ENCODE measurements at regions of chr19 and their contacts with region 1.

Region 1: GRCh38 chr19:55341171-55341588 is 1.5 kb downstream of the KMT5C start:
- DNase-seq: peak; percentile 77 to 89 (median 87)
- ATAC-seq: no peak
- H3K4me3 ChIP-seq: peak overlapping the region; percentile 93
- H3K27ac ChIP-seq: no peak overlapping the region
- H3K4me1 ChIP-seq: peaks cover 5% of the 10 kb centered on the region
- H3K27me3 ChIP-seq: no peaks in the 10 kb centered on the region

Region 2: GRCh38 chr19:55305483-55305882 is 35.7 kb before region 1 on chr19:
- intact Hi-C with region 1: no loop called
- DNase-seq: peak in 1 of 3 donors; percentile 72
- ATAC-seq: peak in 1 of 2 donors; percentile 61
- H3K4me3 ChIP-seq: no peak overlapping the region
- H3K27ac ChIP-seq: no peak overlapping the region
- H3K4me1 ChIP-seq: no peaks in the 10 kb centered on the region
- H3K27me3 ChIP-seq: no peaks in the 10 kb centered on the region

Region 3: DNA sequence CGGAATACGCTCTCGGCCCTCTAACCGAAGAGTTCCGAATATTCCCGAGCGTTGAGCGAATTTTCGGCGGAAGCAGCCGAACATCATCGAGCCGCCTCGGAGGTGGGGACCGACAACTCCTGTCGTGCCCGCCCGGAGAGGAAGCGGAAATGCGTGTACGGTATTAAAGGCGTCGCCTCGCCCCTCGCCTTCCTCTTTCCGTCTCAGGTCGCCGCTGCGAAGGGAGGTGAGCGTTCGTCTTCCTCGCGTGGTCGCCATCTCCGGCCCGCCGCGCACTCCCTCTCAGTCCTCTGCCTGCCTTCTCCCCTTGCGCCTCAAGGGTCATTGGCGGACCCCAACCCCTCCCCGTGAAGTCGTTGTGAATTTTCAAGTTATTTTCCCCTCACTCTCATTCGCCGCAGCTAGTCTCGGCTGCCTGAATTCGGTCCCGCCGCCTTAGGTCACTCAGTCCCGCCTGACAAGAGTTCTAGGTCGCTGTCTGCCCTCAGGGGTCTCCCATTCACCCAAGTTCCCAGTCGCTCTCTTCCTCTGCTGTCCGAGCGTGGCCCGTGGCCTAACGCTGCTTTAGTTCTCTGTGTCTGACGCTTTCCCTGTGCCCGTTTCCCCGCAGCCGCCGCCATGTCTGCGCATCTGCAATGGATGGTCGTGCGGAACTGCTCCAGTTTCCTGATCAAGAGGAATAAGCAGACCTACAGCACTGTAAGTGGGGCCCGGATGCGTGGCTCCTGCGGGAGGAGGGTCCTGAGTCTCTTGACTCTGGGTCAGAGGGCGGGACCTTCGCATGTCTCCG is 44.8 kb after region 1 on chr19 and contains the start of gene RPL28:
- intact Hi-C with region 1: loop called in 1 of 4 experiments (anchors 5 kb)
- DNase-seq: peak; percentile 98 to 99 (median 99)
- ATAC-seq: peak; percentile 92 to 93
- H3K4me3 ChIP-seq: peak within 1 kb of the TSS; percentile 94
- H3K27ac ChIP-seq: peak within 1 kb of the TSS; percentile 99
- H3K4me1 ChIP-seq: peaks cover 12% of the 10 kb centered on the region
- H3K27me3 ChIP-seq: no peaks in the 10 kb centered on the region
- total RNA-seq, gene RPL28: 656 to 1,015 (median 735) TPM

Region 4: DNA sequence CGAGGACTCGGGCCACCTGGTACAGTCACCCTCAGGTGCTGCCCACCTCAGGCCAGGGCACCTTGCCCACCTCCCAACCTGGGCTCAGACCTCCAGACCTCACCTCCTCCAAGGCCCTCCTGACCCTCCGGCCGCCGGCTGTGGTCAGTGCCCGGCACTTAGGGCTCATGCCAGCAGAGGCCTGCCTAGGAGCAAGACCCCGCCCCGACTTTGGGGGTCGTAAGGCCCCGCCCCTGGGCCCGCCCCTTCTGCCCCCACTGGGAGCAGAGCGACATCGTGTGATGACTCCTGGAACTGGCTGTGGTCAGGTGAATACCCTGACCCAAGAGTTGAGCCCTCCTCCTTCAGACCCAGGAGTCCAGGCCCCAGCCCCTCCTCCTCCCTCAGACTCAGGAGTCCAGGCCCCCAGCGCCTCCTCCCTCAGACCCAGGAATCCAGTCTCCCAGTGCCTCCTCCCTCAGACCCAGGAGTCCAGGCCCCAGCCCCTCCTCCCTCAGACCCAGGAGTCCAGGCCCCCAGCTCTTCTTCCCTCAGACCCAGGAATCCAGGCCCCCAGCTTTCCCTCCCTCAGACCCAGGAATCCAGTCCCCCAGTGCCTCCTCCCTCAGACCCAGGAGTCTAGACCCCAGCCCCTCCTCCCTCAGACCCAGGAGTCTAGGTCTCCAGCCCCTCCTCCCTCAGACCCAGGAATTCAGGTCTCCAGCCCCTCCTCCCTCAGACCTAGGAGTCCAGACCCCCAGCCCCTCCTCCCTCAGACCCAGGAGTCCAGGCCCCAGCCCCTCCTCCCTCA is 196.0 kb after region 1 on chr19 and contains the start of gene SBK2:
- intact Hi-C with region 1: no loop called
- DNase-seq: peak; percentile 70 to 91 (median 86)
- ATAC-seq: peak; percentile 71 to 72
- H3K4me3 ChIP-seq: peak within 1 kb of the TSS; percentile 63
- H3K27ac ChIP-seq: peak within 1 kb of the TSS; percentile 44
- H3K4me1 ChIP-seq: no peaks in the 10 kb centered on the region
- H3K27me3 ChIP-seq: no peaks in the 10 kb centered on the region
- total RNA-seq, gene SBK2: 205 to 239 (median 209) TPM